ENCODE measurements at regions of chr3 and their contacts with region 1.

Region 1: DNA sequence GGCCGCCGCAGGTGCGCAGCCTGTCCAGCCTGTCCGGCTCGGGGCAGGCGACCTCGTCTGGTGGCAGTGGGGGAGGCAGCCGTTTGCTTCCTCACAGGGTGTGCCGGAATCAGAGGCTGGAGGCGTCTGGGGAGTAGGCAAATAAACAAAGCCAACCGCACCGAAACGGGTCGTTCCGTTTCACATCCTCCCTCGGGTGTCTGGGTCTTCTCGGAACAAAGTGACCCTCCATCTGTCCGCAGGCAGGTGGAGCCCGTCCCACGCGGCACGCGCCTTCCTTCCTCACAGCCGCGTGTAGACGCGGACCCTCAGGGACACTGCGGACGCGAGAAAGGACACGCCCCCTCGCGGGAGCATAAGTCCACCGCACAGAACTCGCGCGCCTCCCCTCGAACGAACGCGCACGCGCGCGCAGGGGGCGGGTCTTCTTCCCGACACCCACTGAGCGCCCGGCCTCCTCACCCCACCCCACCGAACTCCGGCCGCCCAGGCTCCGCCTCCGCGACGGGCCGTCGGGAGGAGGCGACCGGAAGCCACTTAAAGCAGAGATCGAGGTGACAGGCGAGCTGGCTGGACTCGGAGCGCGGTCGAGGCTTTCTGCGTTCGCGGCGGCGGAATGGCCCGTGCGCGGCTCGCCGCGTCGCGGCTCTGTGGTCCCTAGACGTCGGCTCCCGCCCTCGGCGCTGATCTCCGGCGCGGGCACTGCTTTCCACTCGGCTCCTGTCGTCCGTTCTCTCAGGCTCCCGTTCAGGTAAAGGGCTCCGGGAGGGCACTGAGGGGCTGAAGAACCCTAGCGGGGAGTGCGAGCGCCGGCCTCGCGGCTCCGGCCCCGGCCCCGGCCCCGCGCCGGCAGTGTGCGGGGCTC is at the start of gene TIPARP:
- DNase-seq: peak; percentile 98 to 100 (median 99)
- ATAC-seq: peak; percentile 82
- H3K4me3 ChIP-seq: peak within 1 kb of the TSS; percentile 84 to 95
- H3K4me3 Mint-ChIP-seq: peak within 1 kb of the TSS; percentile 97
- H3K27ac ChIP-seq: peak within 1 kb of the TSS; percentile 79 to 89
- H3K27ac Mint-ChIP-seq: peak within 1 kb of the TSS; percentile 99
- H3K4me1 ChIP-seq: peaks cover 34% of the 10 kb centered on the region
- H3K4me1 Mint-ChIP-seq: peaks cover 47% of the 10 kb centered on the region
- H3K27me3 ChIP-seq: no peaks in the 10 kb centered on the region
- H3K27me3 Mint-ChIP-seq: no peaks in the 10 kb centered on the region
- CTCF ChIP-seq: peak; percentile 36
- total RNA-seq, gene TIPARP: 265 to 268 TPM

Region 2: DNA sequence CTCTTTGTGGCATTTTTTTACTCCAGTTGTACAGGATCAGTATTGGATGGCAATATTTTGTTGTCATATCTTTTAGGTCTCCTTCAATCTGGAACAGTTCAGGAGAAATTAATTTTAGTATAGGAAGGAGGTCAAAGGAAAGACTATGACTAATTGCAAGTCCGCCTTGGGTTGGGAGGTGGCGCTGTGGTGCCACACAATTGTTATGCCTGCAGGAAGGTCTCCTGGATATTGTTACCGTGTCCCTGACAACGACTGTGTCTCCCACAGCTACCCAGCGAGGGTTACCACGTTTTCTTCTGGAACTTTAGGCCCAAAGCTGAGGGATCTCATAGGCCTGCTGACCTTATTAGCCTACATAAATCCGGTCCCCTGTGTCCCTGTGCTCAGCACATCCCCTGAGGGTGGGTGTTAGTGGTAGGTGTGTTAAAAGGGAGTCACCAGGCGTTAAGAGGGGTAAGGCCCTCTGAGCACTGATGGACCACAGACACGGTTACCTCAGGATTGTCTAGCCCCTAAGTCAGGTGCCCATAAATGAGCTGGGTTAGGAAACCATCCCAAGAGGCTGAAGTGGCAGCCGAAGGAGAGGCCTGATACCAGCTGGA is 522.4 kb before region 1 on chr3:
- CTCF ChIA-PET with region 1: interaction called, 3 read pairs
- POLR2A ChIA-PET with region 1: interaction called, 3 read pairs
- intact Hi-C with region 1: loop called (anchors 1 to 10 kb)
- DNase-seq: peak in 8 of 9 experiments; percentile 25 to 66 (median 54)
- ATAC-seq: peak; percentile 56
- H3K4me3 ChIP-seq: no peak overlapping the region
- H3K4me3 Mint-ChIP-seq: no peak overlapping the region
- H3K27ac ChIP-seq: no peak overlapping the region
- H3K27ac Mint-ChIP-seq: no peak overlapping the region
- H3K4me1 ChIP-seq: no peaks in the 10 kb centered on the region
- H3K4me1 Mint-ChIP-seq: peaks cover 3% of the 10 kb centered on the region
- H3K27me3 ChIP-seq: no peaks in the 10 kb centered on the region
- H3K27me3 Mint-ChIP-seq: peaks cover 5% of the 10 kb centered on the region
- CTCF ChIP-seq: peak; percentile 73

Region 3: GRCh38 chr3:156643729-156644389 is 30.4 kb before region 1 on chr3:
- CTCF ChIA-PET with region 1: interaction called, 4 read pairs
- POLR2A ChIA-PET with region 1: interaction called, 3 read pairs
- intact Hi-C with region 1: loop called in 1 of 2 experiments (anchors 2 kb)
- DNase-seq: peak in 8 of 9 experiments; percentile 13 to 68 (median 40)
- ATAC-seq: peak; percentile 80
- H3K4me3 ChIP-seq: no peak overlapping the region
- H3K4me3 Mint-ChIP-seq: peak overlapping the region; percentile 62
- H3K27ac ChIP-seq: no peak overlapping the region
- H3K27ac Mint-ChIP-seq: peak overlapping the region; percentile 28
- H3K4me1 ChIP-seq: peaks cover 17% of the 10 kb centered on the region
- H3K4me1 Mint-ChIP-seq: peaks cover 20% of the 10 kb centered on the region
- H3K27me3 ChIP-seq: no peaks in the 10 kb centered on the region
- H3K27me3 Mint-ChIP-seq: no peaks in the 10 kb centered on the region
- CTCF ChIP-seq: no peak

Region 4: GRCh38 chr3:156859578-156859977 is 185.3 kb after region 1 on chr3:
- CTCF ChIA-PET with region 1: interaction called, 4 read pairs
- POLR2A ChIA-PET with region 1: no interaction called
- intact Hi-C with region 1: loop called in 1 of 2 experiments (anchors 1 kb)
- DNase-seq: no peak
- ATAC-seq: no peak
- H3K4me3 ChIP-seq: no peak overlapping the region
- H3K4me3 Mint-ChIP-seq: no peak overlapping the region
- H3K27ac ChIP-seq: no peak overlapping the region
- H3K27ac Mint-ChIP-seq: no peak overlapping the region
- H3K4me1 ChIP-seq: no peaks in the 10 kb centered on the region
- H3K4me1 Mint-ChIP-seq: no peaks in the 10 kb centered on the region
- H3K27me3 ChIP-seq: no peaks in the 10 kb centered on the region
- H3K27me3 Mint-ChIP-seq: no peaks in the 10 kb centered on the region
- CTCF ChIP-seq: no peak

Region 5: GRCh38 chr3:157130467-157131251 is 456.4 kb after region 1 on chr3:
- CTCF ChIA-PET with region 1: interaction called, 5 read pairs
- POLR2A ChIA-PET with region 1: interaction called, 3 read pairs
- intact Hi-C with region 1: loop called (anchors 1 to 2 kb)
- DNase-seq: peak; percentile 44 to 93 (median 85)
- ATAC-seq: peak; percentile 69
- H3K4me3 ChIP-seq: peak overlapping the region; percentile 14 to 24
- H3K4me3 Mint-ChIP-seq: peak overlapping the region; percentile 72
- H3K27ac ChIP-seq: peak overlapping the region; percentile 71 to 90
- H3K27ac Mint-ChIP-seq: peak overlapping the region; percentile 99
- H3K4me1 ChIP-seq: peaks cover 50% of the 10 kb centered on the region
- H3K4me1 Mint-ChIP-seq: peaks cover 71% of the 10 kb centered on the region
- H3K27me3 ChIP-seq: no peaks in the 10 kb centered on the region
- H3K27me3 Mint-ChIP-seq: no peaks in the 10 kb centered on the region
- CTCF ChIP-seq: peak; percentile 84

Region 6: GRCh38 chr3:158109804-158110657 is 1435.8 kb after region 1 on chr3 and contains the start of gene RSRC1:
- CTCF ChIA-PET with region 1: no interaction called
- POLR2A ChIA-PET with region 1: no interaction called
- intact Hi-C with region 1: loop called (anchors 10 kb)
- DNase-seq: peak; percentile 48 to 89 (median 78)
- ATAC-seq: peak; percentile 89
- H3K4me3 ChIP-seq: peak within 1 kb of the TSS; percentile 76 to 82
- H3K4me3 Mint-ChIP-seq: peak within 1 kb of the TSS; percentile 93
- H3K27ac ChIP-seq: peak within 1 kb of the TSS; percentile 61 to 69
- H3K27ac Mint-ChIP-seq: peak within 1 kb of the TSS; percentile 85
- H3K4me1 ChIP-seq: peaks cover 44% of the 10 kb centered on the region
- H3K4me1 Mint-ChIP-seq: peaks cover 65% of the 10 kb centered on the region
- H3K27me3 ChIP-seq: peaks cover 35 to 41% of the 10 kb centered on the region in 2 experiments
- H3K27me3 Mint-ChIP-seq: peaks cover 36% of the 10 kb centered on the region
- CTCF ChIP-seq: no peak
- total RNA-seq, gene RSRC1: 21.8 to 25.0 TPM

Measured in CD8-positive, alpha-beta T cell (primary cell).